ENCODE measurements at regions of chr11 and their contacts with region 1.

Region 1: GRCh38 chr11:61477727-61478148 is 30.8 kb upstream of the LRRC10B start:
- DNase-seq: peak in 4 of 5 donors; percentile 41 to 63 (median 52)
- ATAC-seq: peak in 3 of 4 donors; percentile 27 to 44 (median 32)
- H3K4me3 ChIP-seq: no peak overlapping the region
- H3K27ac ChIP-seq: peak overlapping the region in 5 of 12 donors; percentile 7 to 58 (median 34)
- H3K4me1 ChIP-seq: peaks cover 0 to 40% (median 13%) of the 10 kb centered on the region in 12 donors
- H3K27me3 ChIP-seq: no peaks in the 10 kb centered on the region
- CTCF ChIP-seq: peak; percentile 89 to 96 (median 93)
- POLR2A ChIP-seq: no peak

Region 2: DNA sequence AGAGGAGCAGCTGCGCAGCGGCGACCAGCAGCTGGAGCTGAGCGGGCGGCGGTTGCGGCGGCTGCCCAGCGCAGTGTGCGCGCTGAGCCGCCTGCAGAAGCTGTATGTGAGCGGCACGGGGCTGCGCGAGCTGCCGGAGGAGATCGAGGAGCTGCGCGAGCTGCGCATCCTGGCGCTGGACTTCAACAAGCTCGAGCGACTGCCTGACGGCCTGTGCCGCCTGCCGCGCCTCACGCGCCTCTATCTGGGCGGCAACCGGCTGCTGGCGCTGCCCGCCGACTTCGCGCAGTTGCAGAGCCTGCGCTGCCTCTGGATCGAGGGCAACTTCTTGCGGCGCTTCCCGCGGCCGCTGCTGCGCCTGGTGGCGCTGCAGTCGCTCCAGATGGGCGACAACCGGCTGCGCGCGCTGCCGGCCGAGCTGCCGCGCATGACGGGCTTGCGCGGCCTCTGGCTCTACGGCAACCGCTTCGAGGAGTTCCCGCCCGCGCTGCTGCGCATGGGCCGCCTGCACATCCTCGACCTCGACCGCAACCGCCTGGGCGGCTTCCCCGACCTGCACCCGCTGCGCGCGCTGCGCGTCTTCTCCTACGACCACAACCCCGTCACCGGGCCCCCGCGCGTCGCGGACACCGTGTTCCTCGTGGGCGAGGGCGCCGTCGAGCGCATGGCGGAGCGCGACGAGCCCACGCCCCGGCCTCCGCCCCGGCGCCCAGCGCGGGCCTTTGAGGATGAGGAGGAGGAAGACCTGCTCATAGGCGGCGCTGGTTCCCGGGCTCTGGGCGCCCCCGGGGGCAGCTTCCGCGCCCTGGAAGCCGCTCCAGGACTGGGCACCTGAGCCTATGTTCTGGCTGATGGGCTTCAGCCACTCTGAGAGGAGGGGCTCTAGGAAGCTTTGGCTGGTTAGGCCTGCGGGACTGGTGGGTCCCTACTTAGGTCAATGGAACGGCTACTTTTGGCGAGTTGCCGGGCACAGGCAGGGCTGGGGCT is 31.6 kb after region 1 on chr11:
- intact Hi-C with region 1: loop called in 2 of 10 experiments (anchors 1 to 5 kb)
- DNase-seq: peak; percentile 54 to 85 (median 80)
- ATAC-seq: peak; percentile 46 to 94 (median 85)
- H3K4me3 ChIP-seq: peak overlapping the region in 11 of 12 donors; percentile 13 to 51 (median 44)
- H3K27ac ChIP-seq: peak overlapping the region in 11 of 12 donors; percentile 9 to 77 (median 61)
- H3K4me1 ChIP-seq: peaks cover 0 to 20% (median 9%) of the 10 kb centered on the region in 12 donors
- H3K27me3 ChIP-seq: peaks cover 7 to 70% (median 39%) of the 10 kb centered on the region in 9 donors
- CTCF ChIP-seq: peak; percentile 19 to 74 (median 52)
- POLR2A ChIP-seq: no peak

Region 3: GRCh38 chr11:61532139-61533038 is 54.7 kb after region 1 on chr11:
- intact Hi-C with region 1: no loop called
- DNase-seq: no peak
- ATAC-seq: no peak
- H3K4me3 ChIP-seq: no peak overlapping the region
- H3K27ac ChIP-seq: no peak overlapping the region
- H3K4me1 ChIP-seq: peaks cover 0 to 46% (median 16%) of the 10 kb centered on the region in 12 donors
- H3K27me3 ChIP-seq: no peaks in the 10 kb centered on the region
- CTCF ChIP-seq: peak; percentile 63 to 86 (median 78)
- POLR2A ChIP-seq: no peak

Region 4: DNA sequence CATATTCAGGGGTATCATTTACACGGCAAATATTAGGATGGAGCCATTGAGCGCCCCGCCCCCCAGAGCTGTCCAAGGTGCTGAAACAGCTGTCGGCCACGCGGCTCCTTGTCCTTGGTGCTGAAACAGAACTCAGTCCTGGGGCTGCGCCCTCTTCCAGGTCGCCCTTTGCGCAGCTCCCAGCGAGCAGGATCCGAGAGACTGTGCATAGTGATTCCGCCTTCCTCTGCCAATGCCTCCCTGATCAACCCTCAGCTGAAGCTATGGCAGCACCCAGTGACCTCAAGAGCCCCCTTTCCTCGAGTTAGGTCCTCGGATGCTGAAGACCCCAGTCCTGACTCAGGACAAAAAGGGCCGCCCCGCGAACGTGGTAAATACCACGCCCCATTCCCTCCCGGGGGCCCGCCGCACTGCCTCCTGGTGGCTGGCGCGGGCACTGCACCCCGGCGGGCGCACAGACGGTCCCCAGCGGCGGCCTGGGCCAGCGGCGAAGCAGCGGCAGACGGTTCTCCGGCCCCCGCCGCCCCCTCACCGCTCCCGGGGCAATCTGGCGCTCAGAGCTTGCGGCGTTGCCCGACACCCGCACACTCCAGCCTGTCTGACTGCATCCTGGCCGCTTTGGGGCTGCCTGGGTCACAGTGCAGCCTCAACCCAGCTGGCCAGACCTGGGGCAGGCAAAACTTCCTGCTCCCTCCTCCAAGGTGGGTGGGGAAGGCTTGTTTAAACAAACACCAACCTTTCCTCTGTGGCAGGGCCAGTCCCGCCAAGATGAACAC is 89.7 kb after region 1 on chr11:
- intact Hi-C with region 1: loop called in 3 of 10 experiments (anchors 2 to 10 kb)
- DNase-seq: peak; percentile 79 to 86 (median 82)
- ATAC-seq: peak; percentile 29 to 83 (median 78)
- H3K4me3 ChIP-seq: no peak overlapping the region
- H3K27ac ChIP-seq: no peak overlapping the region
- H3K4me1 ChIP-seq: peaks cover 0 to 33% (median 7%) of the 10 kb centered on the region in 12 donors
- H3K27me3 ChIP-seq: peaks cover 0 to 10% (median 0%) of the 10 kb centered on the region in 9 donors
- CTCF ChIP-seq: peak; percentile 15 to 63 (median 45)
- POLR2A ChIP-seq: no peak

Region 5: GRCh38 chr11:61627567-61628445 is 150.1 kb after region 1 on chr11:
- intact Hi-C with region 1: loop called in 3 of 10 experiments (anchors 1 to 5 kb)
- DNase-seq: peak; percentile 71 to 81 (median 75)
- ATAC-seq: peak; percentile 51 to 84 (median 80)
- H3K4me3 ChIP-seq: no peak overlapping the region
- H3K27ac ChIP-seq: peak overlapping the region in 8 of 12 donors; percentile 81 to 94 (median 88)
- H3K4me1 ChIP-seq: peaks cover 0 to 24% (median 10%) of the 10 kb centered on the region in 12 donors
- H3K27me3 ChIP-seq: no peaks in the 10 kb centered on the region
- CTCF ChIP-seq: peak; percentile 58 to 89 (median 82)
- POLR2A ChIP-seq: no peak

Region 6: GRCh38 chr11:61733120-61733978 is 255.6 kb after region 1 on chr11:
- intact Hi-C with region 1: loop called in 3 of 10 experiments (anchors 5 to 10 kb)
- DNase-seq: peak; percentile 83 to 93 (median 87)
- ATAC-seq: peak; percentile 74 to 90 (median 84)
- H3K4me3 ChIP-seq: no peak overlapping the region
- H3K27ac ChIP-seq: peak overlapping the region in 4 of 12 donors; percentile 12 to 59 (median 37)
- H3K4me1 ChIP-seq: peaks cover 0 to 27% (median 9%) of the 10 kb centered on the region in 12 donors
- H3K27me3 ChIP-seq: no peaks in the 10 kb centered on the region
- CTCF ChIP-seq: peak; percentile 98 to 100 (median 99)
- POLR2A ChIP-seq: no peak

Measured in heart left ventricle (tissue), 16 donors.